A549 (cell line): ENCODE measurements at regions of chr1 and their contacts with region 1.

Region 1: DNA sequence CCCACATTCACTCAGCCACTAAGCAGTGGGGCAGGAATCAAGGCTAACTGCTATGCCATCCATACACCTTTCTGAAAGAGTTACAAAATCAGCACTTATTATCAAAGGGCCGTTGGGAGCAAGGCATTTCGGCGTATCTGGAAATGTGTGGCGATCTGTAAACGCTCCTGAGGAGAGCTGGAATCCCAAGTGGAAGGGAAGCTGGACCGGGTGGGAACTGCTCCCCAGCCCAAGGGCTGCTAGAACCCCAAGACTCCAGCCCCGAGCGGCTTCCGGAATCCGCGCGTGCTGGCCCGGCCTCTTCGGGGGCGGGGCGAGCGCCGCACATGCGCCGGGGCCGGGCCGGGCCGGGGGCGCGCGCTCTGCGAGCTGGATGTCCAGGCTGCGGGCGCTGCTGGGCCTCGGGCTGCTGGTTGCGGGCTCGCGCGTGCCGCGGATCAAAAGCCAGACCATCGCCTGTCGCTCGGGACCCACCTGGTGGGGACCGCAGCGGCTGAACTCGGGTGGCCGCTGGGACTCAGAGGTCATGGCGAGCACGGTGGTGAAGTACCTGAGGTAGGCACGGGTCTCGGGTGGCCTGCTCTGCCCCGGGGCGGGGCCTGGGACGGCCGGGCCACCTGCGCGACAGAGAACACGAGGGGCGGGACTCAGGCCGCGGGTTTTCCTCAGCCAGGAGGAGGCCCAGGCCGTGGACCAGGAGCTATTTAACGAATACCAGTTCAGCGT is at the start of gene NAXE:
- DNase-seq: peak; percentile 57 to 79
- ATAC-seq: peak; percentile 76 to 89
- H3K4me3 ChIP-seq: peak within 1 kb of the TSS; percentile 72
- H3K27ac ChIP-seq: peak within 1 kb of the TSS; percentile 94 to 98
- H3K4me1 ChIP-seq: peaks cover 10% of the 10 kb centered on the region; the same call in 2 of the 3 replicates
- CTCF ChIP-seq: no peak
- EP300 ChIP-seq: no peak
- POLR2A ChIP-seq: peak; percentile 91
- RAD21 ChIP-seq: no peak
- polyA plus RNA-seq, gene NAXE: 81.4 and 109 TPM in 2 replicates

Region 2: DNA sequence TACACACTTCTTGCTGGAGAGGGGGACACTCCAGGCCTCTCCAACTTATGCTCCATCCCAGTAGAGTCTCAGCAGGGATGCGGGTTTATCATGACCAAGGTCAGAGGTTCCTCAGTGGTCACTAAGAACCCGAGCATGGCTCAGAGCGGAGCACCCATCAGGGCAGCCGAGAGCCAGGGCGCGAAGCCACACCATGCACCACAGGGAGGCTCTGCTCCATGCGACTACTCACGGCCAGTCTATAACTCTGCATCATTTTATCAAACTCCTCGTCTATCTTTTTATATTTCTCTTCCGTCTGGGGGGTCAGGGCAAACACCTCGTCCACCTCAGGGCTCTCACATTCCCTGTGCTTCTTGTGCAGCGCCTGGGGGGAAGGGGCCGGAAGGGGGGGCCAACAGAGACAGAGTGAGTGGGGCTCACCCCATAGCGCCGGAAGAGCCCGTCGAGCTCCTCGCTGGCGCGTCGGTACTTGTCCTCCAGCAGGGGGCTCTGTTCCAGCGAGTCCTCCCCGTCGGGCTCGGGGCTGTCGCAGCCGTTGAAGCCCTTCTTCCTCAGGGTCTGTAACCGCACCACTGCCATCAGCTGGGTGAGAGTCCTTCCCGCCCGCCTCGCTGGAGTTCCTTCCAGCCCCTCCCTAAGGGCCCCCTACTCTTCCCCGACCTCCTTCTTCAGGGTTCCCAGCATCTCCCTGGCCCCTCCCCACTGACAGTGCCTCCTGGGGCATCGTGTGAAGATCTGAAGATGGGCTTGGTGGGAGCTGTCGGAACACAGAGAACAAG is 111.0 kb before region 1 on chr1:
- CTCF ChIA-PET with region 1: interaction called, 18 read pairs
- POLR2A ChIA-PET with region 1: no interaction called
- DNase-seq: peak; percentile 59 to 83
- ATAC-seq: peak; percentile 36 to 78; a peak in 3 of 6 replicates
- H3K4me3 ChIP-seq: no peak overlapping the region
- H3K27ac ChIP-seq: peak overlapping the region in 1 of 2 experiments; percentile 42; a peak in 2 of 6 replicates
- H3K4me1 ChIP-seq: peaks cover 29% of the 10 kb centered on the region
- CTCF ChIP-seq: peak; percentile 64
- EP300 ChIP-seq: no peak
- POLR2A ChIP-seq: no peak
- RAD21 ChIP-seq: peak; percentile 53 to 57